HepG2 (cell line): ENCODE measurements at regions of chr4 and their contacts with region 1.

Region 1: GRCh38 chr4:177117256-177117655 is 192.4 kb upstream of the NEIL3 start:
- DNase-seq: no peak
- ATAC-seq: no peak
- H3K4me3 ChIP-seq: no peak overlapping the region
- H3K27ac ChIP-seq: no peak overlapping the region
- H3K4me1 ChIP-seq: no peaks in the 10 kb centered on the region
- H3K27me3 ChIP-seq: no peaks in the 10 kb centered on the region
- CTCF ChIP-seq: no peak
- EP300 ChIP-seq: no peak
- POLR2A ChIP-seq: no peak
- RAD21 ChIP-seq: no peak

Region 2: DNA sequence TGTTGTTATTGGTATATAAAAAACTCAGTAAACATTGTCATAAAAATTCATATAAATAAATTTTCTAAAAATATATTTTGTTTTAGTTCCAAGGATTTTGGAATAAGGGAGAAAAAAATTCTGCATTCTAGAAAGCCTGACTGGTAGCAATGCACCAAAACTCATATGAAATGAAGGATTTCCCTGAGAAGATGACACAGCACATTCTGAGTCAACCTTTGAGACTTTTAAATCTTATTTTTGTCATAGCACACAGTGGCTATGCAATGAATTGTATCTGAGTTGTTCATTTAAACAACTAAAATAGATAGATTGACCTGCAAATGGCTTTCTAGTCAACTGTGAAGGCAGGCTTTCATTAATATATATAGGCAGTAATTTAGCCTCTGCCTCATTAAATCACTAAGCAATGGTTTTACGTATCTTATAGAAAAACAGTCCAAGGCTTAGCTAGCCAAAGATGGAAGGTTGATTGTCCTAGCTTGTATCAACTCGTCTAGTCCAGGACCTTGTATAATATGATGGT is 46.7 kb before region 1 on chr4:
- CTCF ChIA-PET with region 1: no interaction called
- POLR2A ChIA-PET with region 1: no interaction called
- in situ Hi-C with region 1: no loop called
- intact Hi-C with region 1: loop called (anchors 1 kb)
- DNase-seq: no peak
- ATAC-seq: no peak
- H3K4me3 ChIP-seq: no peak overlapping the region
- H3K27ac ChIP-seq: no peak overlapping the region
- H3K4me1 ChIP-seq: peaks cover 7% of the 10 kb centered on the region; the same call in 1 of the 2 replicates
- H3K27me3 ChIP-seq: no peaks in the 10 kb centered on the region
- CTCF ChIP-seq: no peak
- EP300 ChIP-seq: no peak
- POLR2A ChIP-seq: no peak
- RAD21 ChIP-seq: no peak